ENCODE measurements at regions of chrX and their contacts with region 1.

Region 1: DNA sequence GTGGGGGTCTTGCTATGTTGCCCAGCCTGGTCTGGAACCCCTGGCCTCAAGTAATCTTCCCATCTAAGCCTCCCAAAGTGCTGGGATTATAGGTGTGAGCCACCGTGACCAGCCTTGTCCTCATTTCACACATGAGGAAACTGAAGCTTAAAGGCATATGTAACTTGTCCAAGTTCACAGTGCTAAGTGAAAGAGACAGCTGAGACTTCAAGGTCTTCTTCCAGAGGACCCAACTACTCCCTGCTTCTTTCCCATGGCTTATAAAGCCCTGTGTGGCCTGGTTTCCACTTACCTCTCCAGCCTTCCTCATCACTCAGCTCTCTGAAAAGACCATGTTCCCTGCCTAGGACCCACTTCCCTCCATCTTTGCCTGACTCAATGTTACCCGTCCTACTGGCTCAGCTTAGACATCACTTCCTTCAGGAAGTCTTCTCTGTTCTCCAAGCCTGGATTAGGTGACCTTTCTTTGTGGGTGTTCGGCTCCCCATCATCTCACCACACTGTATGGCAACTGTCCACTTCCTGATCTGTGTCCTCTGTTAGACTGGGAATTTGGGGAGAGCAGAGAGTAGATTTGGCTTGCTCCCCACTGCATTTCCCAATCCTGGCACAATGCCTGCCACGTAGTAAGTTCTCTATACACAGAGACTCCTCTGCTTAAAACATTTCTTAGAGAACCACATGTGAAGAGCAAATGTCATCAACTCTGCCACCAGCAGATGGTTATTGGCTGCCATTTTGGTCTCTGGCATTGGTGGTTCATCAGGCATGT is 30.4 kb upstream of the LAMP2 start:
- DNase-seq: no peak
- H3K4me3 ChIP-seq: no peak overlapping the region
- H3K4me3 Mint-ChIP-seq: no peak overlapping the region
- H3K27ac ChIP-seq: no peak overlapping the region
- H3K27ac Mint-ChIP-seq: no peak overlapping the region
- H3K4me1 ChIP-seq: no peaks in the 10 kb centered on the region
- H3K4me1 Mint-ChIP-seq: peaks cover 5 to 11% (median 5%) of the 10 kb centered on the region in 3 donors
- H3K27me3 ChIP-seq: no peaks in the 10 kb centered on the region
- H3K27me3 Mint-ChIP-seq: peaks cover 0 to 2% of the 10 kb centered on the region in 2 donors

Region 2: DNA sequence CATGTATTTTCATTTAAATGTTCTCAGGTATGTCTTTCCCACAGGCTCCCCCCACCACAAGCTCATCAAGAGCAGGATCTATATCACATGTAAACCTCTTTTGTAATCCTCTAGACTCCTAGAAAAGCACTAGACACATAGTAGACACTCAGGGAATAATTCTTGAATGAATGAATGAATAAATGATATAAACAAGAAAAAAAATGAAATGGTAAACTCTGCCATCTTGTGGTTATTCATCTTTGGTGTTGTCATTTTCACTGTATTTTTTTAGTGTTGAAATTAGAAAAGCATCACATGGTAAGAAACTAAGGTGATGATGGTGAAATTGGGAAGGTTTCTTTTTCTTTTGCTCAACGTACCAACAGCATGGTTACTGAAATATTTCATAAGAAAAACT is 164.6 kb after region 1 on chrX:
- CTCF ChIA-PET with region 1: interaction called, 11 read pairs
- POLR2A ChIA-PET with region 1: no interaction called
- DNase-seq: peak in 2 of 5 donors; percentile 4 to 5
- H3K4me3 ChIP-seq: no peak overlapping the region
- H3K4me3 Mint-ChIP-seq: no peak overlapping the region
- H3K27ac ChIP-seq: no peak overlapping the region
- H3K27ac Mint-ChIP-seq: no peak overlapping the region
- H3K4me1 ChIP-seq: no peaks in the 10 kb centered on the region
- H3K4me1 Mint-ChIP-seq: no peaks in the 10 kb centered on the region
- H3K27me3 ChIP-seq: no peaks in the 10 kb centered on the region
- H3K27me3 Mint-ChIP-seq: peaks cover 0 to 2% of the 10 kb centered on the region in 2 donors

Measured in CD8-positive, alpha-beta memory T cell (primary cell).